A673 (cell line): ENCODE measurements at regions of chr3 and their contacts with region 1.

Region 1: DNA sequence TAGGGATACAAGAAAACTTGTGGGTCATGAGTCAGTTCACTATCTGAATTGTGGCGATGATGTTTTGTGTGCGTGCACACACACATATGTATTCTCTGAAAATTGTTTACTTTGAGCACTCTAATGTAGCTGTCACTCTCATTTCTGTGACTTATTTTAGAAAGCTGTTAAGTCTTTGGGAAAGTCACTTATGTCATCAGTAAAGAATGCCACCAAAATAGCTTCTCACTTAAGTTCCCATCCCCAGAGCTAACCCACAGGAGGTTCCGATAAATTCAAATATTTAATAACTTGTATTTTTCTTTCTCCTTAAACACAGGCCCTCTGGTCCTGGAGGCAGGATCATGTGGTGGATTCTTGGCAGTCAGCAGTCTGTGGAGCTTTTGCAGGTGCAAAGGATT is 138.3 kb downstream of the LRIG1 start:
- DNase-seq: peak; percentile 4
- H3K4me3 ChIP-seq: no peak overlapping the region
- H3K27ac ChIP-seq: no peak overlapping the region
- H3K4me1 ChIP-seq: peaks cover 23% of the 10 kb centered on the region
- H3K27me3 ChIP-seq: no peaks in the 10 kb centered on the region
- CTCF ChIP-seq: no peak

Region 2: GRCh38 chr3:66544619-66545429 is 182.3 kb after region 1 on chr3:
- CTCF ChIA-PET with region 1: no interaction called
- POLR2A ChIA-PET with region 1: no interaction called
- intact Hi-C with region 1: no loop called
- DNase-seq: no peak
- H3K4me3 ChIP-seq: no peak overlapping the region
- H3K27ac ChIP-seq: no peak overlapping the region
- H3K4me1 ChIP-seq: peaks cover 11% of the 10 kb centered on the region
- H3K27me3 ChIP-seq: no peaks in the 10 kb centered on the region
- CTCF ChIP-seq: no peak

Region 3: DNA sequence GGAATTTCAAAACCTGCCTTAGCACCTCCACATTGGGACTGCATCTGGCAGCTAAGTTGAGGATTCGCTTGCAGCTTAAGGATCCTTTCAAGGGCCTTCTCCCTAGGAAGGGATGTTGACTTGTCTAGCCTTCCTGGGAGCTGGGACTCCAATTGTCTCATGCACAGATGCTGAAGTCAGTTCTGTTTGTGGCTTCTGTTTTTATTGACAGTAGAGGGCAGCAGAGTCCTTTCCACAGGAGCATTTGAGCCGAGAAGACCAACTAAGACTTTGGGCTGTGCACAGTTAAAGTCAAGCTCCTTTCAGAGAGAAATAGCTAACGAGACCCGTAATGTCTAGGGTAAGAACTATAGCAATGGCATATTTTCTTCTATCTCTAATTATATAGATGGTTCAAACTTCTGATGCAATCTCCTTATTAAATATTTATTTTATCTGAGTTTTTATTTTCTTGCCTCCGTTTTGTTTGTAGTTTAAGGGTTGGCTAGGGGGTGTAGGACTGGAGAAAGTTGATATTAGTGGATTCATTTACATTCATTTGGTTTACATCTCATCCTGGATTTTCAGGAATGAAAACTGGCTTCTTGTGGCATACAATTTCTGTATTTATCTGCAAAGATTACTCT is 575.9 kb after region 1 on chr3:
- CTCF ChIA-PET with region 1: no interaction called
- POLR2A ChIA-PET with region 1: no interaction called
- intact Hi-C with region 1: loop called (anchors 10 kb)
- DNase-seq: peak; percentile 67
- H3K4me3 ChIP-seq: no peak overlapping the region
- H3K27ac ChIP-seq: no peak overlapping the region
- H3K4me1 ChIP-seq: no peaks in the 10 kb centered on the region
- H3K27me3 ChIP-seq: peaks cover 12% of the 10 kb centered on the region
- CTCF ChIP-seq: peak; percentile 57